ENCODE measurements at regions of chr4 and their contacts with region 1.

Region 1: GRCh38 chr4:122450847-122451246 is 5.7 kb downstream of the IL2 start:
- DNase-seq: peak; percentile 47
- ATAC-seq: peak; percentile 64
- H3K4me3 Mint-ChIP-seq: peak overlapping the region; percentile 24
- H3K27ac Mint-ChIP-seq: peak overlapping the region; percentile 88
- H3K4me1 Mint-ChIP-seq: peaks cover 20% of the 10 kb centered on the region
- H3K27me3 Mint-ChIP-seq: no peaks in the 10 kb centered on the region

Region 2: DNA sequence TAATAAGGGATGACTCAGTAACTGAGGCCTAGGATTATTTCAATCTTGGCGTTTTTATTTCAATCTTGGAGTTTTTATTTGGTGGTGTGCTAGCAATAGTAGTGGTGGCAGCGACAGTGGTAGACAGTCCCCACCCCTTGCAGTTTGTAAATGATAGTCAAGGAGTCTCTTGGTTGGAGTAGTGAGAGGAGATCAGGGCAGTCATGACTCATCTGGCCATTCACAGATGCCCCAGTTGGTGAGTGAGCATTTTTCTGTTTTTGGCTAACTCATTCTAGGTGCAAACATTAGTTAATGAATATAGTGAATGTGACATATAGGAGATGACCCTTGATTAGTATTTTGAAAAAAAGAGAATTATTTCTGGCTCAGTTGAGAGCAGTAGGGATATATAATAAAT is 165.6 kb before region 1 on chr4:
- CTCF ChIA-PET with region 1: no interaction called
- POLR2A ChIA-PET with region 1: no interaction called
- intact Hi-C with region 1: no loop called
- DNase-seq: no peak
- ATAC-seq: no peak
- H3K4me3 Mint-ChIP-seq: no peak overlapping the region
- H3K27ac Mint-ChIP-seq: no peak overlapping the region
- H3K4me1 Mint-ChIP-seq: no peaks in the 10 kb centered on the region
- H3K27me3 Mint-ChIP-seq: no peaks in the 10 kb centered on the region

Region 3: DNA sequence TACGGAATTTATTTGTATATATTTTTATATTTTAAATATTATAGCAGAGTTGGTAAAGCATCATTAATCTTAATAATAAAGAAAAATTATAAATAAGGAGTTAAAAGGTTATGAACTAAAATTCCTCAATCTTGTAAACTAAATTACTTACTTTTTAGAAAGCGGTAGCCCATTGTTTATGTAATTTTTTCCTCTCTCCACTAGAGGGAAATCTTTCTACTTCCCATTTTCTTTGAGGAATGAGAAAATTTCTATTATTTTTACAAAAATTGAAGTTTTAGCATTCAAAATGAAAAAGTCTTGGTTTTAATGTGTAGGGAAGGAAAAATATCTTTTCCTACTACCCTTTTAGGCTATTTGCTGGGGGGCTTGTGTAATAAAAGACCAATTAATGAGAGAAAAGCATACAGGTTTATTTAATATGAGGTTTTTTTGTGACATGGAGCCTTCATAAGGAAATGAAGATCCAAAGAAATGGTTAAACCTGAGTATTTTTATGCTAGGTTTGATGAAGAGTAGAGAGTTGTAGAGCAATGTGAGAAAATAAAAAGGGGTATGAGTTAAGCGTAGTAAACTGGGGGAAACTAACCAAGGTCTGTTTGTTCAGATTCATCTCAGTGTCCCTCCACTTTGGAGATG is 140.7 kb before region 1 on chr4:
- CTCF ChIA-PET with region 1: interaction called, 4 read pairs
- POLR2A ChIA-PET with region 1: no interaction called
- intact Hi-C with region 1: loop called (anchors 5 kb)
- DNase-seq: no peak
- ATAC-seq: no peak
- H3K4me3 Mint-ChIP-seq: no peak overlapping the region
- H3K27ac Mint-ChIP-seq: peak overlapping the region; percentile 51
- H3K4me1 Mint-ChIP-seq: peaks cover 2% of the 10 kb centered on the region
- H3K27me3 Mint-ChIP-seq: no peaks in the 10 kb centered on the region

Region 4: DNA sequence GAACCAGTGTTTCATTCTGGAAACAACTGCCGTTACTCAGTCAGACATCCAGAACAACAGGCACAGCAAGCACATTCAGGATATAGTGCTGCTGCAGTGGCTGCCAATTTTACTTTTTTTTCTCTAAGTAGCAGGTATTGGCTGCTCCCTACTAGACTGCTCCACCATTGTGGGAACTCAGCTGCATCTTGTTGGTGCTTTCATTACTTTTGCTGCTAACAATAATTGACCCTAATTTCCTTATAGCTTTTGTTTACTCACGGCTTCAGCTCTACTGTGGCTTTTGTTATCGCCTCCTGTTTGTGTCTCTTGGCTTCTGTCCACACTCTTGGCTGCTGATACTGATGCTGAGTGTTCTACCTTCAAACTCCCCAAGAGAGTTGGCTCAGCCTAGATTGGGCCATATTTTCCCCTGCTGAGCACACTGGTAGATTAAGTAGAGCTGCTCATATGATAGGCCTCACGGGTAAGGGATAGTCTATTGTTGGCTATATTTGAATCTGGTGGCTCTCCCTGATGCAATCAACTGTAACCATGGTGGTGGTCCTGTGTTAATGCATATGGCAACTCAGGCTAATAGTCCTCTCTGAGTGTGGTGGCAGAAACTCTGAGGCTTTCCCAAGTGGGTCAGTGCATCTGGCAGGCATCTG is 50.1 kb after region 1 on chr4:
- CTCF ChIA-PET with region 1: no interaction called
- POLR2A ChIA-PET with region 1: no interaction called
- intact Hi-C with region 1: no loop called
- DNase-seq: no peak
- ATAC-seq: no peak
- H3K4me3 Mint-ChIP-seq: no peak overlapping the region
- H3K27ac Mint-ChIP-seq: no peak overlapping the region
- H3K4me1 Mint-ChIP-seq: peaks cover 35% of the 10 kb centered on the region
- H3K27me3 Mint-ChIP-seq: no peaks in the 10 kb centered on the region